ENCODE measurements at regions of chr10 and their contacts with region 1.

Region 1: DNA sequence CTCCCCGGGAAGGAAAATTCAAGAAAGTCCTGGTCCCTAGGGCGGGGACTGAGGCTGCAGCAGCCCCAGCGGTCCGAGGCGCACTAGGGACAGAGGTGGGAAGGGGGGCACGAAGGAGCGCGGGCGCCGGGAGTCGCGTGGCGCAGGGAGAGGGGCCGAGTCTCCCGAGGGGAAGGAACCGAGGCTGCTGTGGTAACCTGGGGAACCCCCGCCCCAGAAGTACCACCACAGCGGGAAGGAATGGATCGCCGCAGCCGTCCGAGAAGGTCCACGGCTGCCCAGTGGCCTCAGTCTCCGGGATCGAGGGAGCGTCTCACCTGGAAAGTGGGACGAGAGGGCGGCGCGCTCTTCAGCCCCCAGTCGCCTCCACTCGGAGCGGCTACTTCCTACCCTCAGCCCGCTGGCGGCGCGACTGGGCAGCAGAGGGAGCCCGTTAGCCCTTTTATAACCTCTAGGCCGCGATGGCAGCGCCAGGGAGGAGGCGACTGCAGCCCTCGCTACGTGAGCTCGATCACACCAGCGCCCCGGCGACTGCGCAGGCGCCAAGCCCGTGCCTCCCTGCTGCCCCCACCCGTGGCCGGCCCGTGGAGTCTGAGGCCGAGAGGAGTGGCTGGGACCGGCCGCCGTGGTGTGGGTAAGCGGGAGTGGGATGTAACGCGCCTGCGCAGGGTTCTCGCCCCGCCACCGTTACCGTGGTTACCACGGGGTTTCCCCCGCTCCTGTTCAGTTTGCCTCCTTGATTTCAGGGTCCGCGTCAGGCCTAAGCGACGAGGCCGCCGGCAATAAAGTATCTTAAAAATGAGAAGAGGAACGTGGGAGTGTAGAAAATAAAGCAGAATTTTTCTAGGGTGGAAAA is at the start of gene P4HA1:
- DNase-seq: peak; percentile 99
- H3K4me3 Mint-ChIP-seq: peak within 1 kb of the TSS; percentile 92
- H3K27ac Mint-ChIP-seq: peak within 1 kb of the TSS; percentile 92
- H3K4me1 Mint-ChIP-seq: peaks cover 27% of the 10 kb centered on the region
- H3K27me3 Mint-ChIP-seq: no peaks in the 10 kb centered on the region
- total RNA-seq, gene P4HA1: 30.9 to 31.2 TPM

Region 2: DNA sequence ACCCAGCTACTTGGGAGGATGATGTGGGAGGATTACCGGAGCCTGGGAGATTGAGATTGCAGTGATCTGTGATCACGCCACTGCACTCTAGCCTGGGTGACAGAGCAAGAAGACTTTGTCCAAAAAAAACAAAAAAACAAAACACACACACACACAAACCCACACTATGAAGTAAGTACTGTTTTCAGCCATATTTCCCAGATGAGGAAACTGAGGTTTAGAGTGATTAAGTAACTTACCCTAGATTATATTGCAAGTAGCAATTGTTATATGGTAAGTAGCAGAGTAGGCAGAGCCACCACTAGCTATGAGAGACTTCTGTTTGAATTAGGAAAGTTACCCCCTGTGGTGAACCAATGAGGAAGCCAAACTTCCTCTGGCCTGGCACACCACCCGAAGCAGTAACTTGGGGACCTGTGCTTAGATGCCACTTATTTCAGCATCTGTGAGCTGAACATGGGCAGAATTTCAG is 342.9 kb before region 1 on chr10:
- CTCF ChIA-PET with region 1: no interaction called
- POLR2A ChIA-PET with region 1: no interaction called
- intact Hi-C with region 1: no loop called
- DNase-seq: no peak
- H3K4me3 Mint-ChIP-seq: no peak overlapping the region
- H3K27ac Mint-ChIP-seq: no peak overlapping the region
- H3K4me1 Mint-ChIP-seq: peaks cover 10% of the 10 kb centered on the region
- H3K27me3 Mint-ChIP-seq: no peaks in the 10 kb centered on the region

Region 3: DNA sequence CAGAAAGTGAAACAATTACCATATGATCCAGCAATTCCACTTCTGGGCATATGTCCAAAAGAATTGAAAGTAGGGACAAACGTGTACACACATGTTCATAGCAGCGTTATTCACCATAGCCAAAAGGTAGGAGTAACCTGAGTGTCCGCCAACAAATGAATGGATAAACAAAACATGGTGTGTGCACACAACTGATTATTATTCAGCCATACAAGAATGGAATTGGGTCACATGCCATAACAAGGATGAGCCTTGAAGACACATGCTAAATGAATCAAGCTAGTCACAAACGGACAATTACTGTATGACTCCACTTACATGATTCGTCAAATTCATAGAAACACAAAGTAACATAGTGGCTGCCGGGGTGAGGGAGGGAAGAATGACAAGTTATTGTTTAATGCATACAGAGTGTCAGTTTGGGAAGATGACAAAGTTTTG is 207.3 kb before region 1 on chr10:
- CTCF ChIA-PET with region 1: no interaction called
- POLR2A ChIA-PET with region 1: no interaction called
- intact Hi-C with region 1: no loop called
- DNase-seq: no peak
- H3K4me3 Mint-ChIP-seq: no peak overlapping the region
- H3K27ac Mint-ChIP-seq: no peak overlapping the region
- H3K4me1 Mint-ChIP-seq: peaks cover 8% of the 10 kb centered on the region
- H3K27me3 Mint-ChIP-seq: peaks cover 2% of the 10 kb centered on the region

Region 4: GRCh38 chr10:72954596-72955554 is 141.8 kb before region 1 on chr10 and contains the start of gene PLA2G12B:
- CTCF ChIA-PET with region 1: no interaction called
- POLR2A ChIA-PET with region 1: no interaction called
- intact Hi-C with region 1: no loop called
- DNase-seq: no peak
- H3K4me3 Mint-ChIP-seq: no peak within 1 kb of the TSS
- H3K27ac Mint-ChIP-seq: no peak within 1 kb of the TSS
- H3K4me1 Mint-ChIP-seq: no peaks in the 10 kb centered on the region
- H3K27me3 Mint-ChIP-seq: peaks cover 5% of the 10 kb centered on the region
- total RNA-seq, gene PLA2G12B: not detected

Region 5: DNA sequence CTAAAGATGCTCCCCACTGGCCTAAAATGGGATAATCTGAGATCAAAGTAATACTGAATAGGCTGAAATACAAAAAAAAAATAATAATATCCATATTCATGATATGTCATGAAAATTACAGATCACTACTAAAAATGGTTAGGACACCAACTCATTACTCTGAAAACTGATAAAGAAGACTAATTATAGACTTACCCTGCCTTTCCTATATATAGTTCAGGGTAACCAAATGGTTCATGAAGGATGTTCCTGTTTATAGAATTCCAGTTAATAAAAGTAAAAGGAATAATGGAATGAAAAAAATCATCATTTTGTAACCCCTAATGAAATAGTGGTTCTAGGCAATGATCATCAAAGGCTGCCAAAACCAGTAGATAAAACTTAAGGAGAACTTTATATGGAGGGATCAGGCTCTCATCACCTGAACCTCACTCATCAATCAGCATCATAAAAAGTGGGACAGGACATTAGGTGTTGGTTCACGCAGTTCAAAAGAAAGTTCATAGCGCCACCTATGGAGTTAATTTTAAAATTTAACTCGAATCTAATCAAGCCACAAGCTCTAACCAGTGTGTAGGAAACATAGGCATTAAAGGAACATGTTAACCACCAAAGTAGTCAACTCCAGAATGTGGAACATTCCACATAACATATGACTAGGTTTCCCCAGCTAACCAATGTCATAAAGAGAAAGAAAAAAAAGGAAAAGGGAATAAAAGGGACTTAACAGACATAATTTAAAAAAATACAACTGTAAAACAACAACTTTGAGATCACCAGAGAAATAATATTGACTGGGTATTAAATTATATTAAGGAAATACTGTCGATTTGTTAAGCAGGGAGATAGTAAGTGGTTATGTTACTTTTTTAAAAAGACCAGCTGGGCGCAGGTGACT is 35.7 kb before region 1 on chr10:
- CTCF ChIA-PET with region 1: interaction called, 16 read pairs
- POLR2A ChIA-PET with region 1: interaction called, 4 read pairs
- intact Hi-C with region 1: no loop called
- DNase-seq: no peak
- H3K4me3 Mint-ChIP-seq: no peak overlapping the region
- H3K27ac Mint-ChIP-seq: no peak overlapping the region
- H3K4me1 Mint-ChIP-seq: peaks cover 10% of the 10 kb centered on the region
- H3K27me3 Mint-ChIP-seq: no peaks in the 10 kb centered on the region

Region 6: GRCh38 chr10:73110345-73110849 is 13.7 kb after region 1 on chr10 and contains the start of gene NUDT13:
- CTCF ChIA-PET with region 1: interaction called, 6 read pairs
- POLR2A ChIA-PET with region 1: interaction called, 12 read pairs
- intact Hi-C with region 1: loop called (anchors 1 kb)
- DNase-seq: peak; percentile 61
- H3K4me3 Mint-ChIP-seq: peak within 1 kb of the TSS; percentile 85
- H3K27ac Mint-ChIP-seq: peak within 1 kb of the TSS; percentile 78
- H3K4me1 Mint-ChIP-seq: peaks cover 10% of the 10 kb centered on the region
- H3K27me3 Mint-ChIP-seq: no peaks in the 10 kb centered on the region
- total RNA-seq, gene NUDT13: 1.0 to 1.4 TPM

Region 7: DNA sequence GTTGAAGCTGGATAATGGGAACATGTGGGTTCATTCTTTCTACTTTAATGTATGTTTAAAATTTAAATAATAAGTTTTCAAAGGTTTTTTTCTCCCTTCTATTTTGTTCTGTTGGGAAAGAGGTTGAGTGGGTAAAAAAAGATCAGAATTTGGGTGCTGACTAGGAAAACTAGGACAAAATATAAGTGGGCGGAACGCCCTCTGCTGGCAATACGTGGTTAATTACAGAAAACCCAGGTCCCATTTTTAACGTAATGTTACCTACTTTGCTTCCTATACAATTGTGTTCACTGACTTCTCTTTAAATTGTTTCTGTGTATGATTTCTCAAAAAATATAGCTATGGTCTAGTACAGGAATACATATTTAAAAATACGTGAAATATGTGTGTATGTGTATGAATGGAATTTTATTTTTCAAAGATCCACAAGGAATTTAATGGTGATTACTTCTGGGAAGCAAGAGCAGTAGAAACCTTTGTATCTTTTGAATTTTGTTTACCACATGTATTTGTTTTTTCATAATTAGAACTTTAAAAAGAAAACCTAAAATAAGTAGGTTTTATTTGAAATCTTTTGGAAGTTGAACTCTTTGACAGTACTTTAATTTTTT is 62.5 kb after region 1 on chr10:
- CTCF ChIA-PET with region 1: interaction called, 62 read pairs
- POLR2A ChIA-PET with region 1: interaction called, 8 read pairs
- intact Hi-C with region 1: loop called (anchors 1 kb)
- DNase-seq: peak; percentile 69
- H3K4me3 Mint-ChIP-seq: no peak overlapping the region
- H3K27ac Mint-ChIP-seq: no peak overlapping the region
- H3K4me1 Mint-ChIP-seq: peaks cover 36% of the 10 kb centered on the region
- H3K27me3 Mint-ChIP-seq: no peaks in the 10 kb centered on the region

Region 8: GRCh38 chr10:73167783-73168464 is 71.2 kb after region 1 on chr10 and contains the starts of genes ECD and FAM149B1:
- CTCF ChIA-PET with region 1: interaction called, 10 read pairs
- POLR2A ChIA-PET with region 1: interaction called, 10 read pairs
- intact Hi-C with region 1: loop called (anchors 2 kb)
- DNase-seq: peak; percentile 96
- H3K4me3 Mint-ChIP-seq: peak within 1 kb of the TSS; percentile 100
- H3K27ac Mint-ChIP-seq: peak within 1 kb of the TSS; percentile 97
- H3K4me1 Mint-ChIP-seq: peaks cover 35% of the 10 kb centered on the region
- H3K27me3 Mint-ChIP-seq: no peaks in the 10 kb centered on the region
- total RNA-seq, gene ECD: 37.5 to 37.7 TPM
- total RNA-seq, gene FAM149B1: 12.8 to 14.6 TPM

Region 9: GRCh38 chr10:73246783-73247508 is 150.3 kb after region 1 on chr10 and contains the start of gene DNAJC9:
- CTCF ChIA-PET with region 1: no interaction called
- POLR2A ChIA-PET with region 1: interaction called, 6 read pairs
- intact Hi-C with region 1: loop called (anchors 1 kb)
- DNase-seq: peak; percentile 99
- H3K4me3 Mint-ChIP-seq: peak within 1 kb of the TSS; percentile 99
- H3K27ac Mint-ChIP-seq: peak within 1 kb of the TSS; percentile 94
- H3K4me1 Mint-ChIP-seq: peaks cover 61% of the 10 kb centered on the region
- H3K27me3 Mint-ChIP-seq: no peaks in the 10 kb centered on the region
- total RNA-seq, gene DNAJC9: 45.8 to 49.3 TPM

Region 10: DNA sequence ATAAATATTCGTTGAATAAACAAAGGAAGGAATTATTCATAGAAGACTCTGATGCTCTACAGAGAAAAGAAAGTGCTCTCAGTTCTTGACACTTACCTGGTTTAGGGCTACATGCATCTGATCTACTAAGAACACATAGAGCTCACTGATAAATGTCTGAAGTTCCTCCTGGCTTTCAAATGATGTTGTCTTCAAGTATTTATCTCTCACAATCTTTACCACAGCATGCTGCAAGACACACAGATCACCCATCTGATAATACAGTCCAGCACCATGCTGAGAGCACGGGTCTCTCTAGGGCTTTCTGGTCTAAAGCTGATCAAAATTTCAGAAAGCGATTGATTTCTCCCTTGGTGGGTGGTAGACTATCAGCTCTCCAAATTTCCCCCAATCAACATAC is 200.3 kb after region 1 on chr10:
- CTCF ChIA-PET with region 1: no interaction called
- POLR2A ChIA-PET with region 1: no interaction called
- intact Hi-C with region 1: no loop called
- DNase-seq: no peak
- H3K4me3 Mint-ChIP-seq: no peak overlapping the region
- H3K27ac Mint-ChIP-seq: no peak overlapping the region
- H3K4me1 Mint-ChIP-seq: peaks cover 7% of the 10 kb centered on the region
- H3K27me3 Mint-ChIP-seq: peaks cover 1% of the 10 kb centered on the region